Head of caudate nucleus (tissue), 42 donors: ENCODE measurements at regions of chr7 and their contacts with region 1.

Region 1: DNA sequence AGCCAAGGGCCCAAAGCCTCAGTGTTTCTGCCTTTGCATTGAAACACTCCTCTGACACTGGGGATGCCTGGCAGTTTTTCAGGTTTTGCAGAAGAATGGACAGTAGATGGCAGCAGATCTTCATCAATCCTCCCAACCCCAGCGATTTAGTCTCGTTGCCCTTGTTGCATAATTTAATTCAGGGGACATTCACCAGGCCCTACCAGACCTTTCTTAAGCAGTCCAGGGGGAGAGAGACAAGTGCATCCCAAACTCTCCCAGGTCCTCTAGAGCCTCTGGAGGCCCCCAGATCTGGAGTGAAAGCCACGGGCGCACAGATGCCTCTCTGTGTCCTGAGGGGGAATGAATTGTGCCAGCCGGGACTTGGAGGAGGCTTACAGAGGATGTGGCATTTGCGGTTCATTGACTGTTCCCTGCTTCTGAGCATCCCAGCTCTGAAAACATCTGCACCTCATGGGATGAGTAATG is 29.6 kb downstream of the MINDY4 start:
- DNase-seq: peak in 41 of 42 donors; percentile 11 to 88 (median 69)

Region 2: GRCh38 chr7:30974605-30975255 is 173.9 kb after region 1 on chr7:
- intact Hi-C with region 1: loop called (anchors 10 kb)
- DNase-seq: peak in 8 of 42 donors; percentile 16 to 55 (median 36)